Activated CD8-positive, alpha-beta T cell treated with anti-CD3 and anti-CD28 coated beads for 36 hours (primary cell): ENCODE measurements at regions of chr5 and their contacts with region 1.

Region 1: DNA sequence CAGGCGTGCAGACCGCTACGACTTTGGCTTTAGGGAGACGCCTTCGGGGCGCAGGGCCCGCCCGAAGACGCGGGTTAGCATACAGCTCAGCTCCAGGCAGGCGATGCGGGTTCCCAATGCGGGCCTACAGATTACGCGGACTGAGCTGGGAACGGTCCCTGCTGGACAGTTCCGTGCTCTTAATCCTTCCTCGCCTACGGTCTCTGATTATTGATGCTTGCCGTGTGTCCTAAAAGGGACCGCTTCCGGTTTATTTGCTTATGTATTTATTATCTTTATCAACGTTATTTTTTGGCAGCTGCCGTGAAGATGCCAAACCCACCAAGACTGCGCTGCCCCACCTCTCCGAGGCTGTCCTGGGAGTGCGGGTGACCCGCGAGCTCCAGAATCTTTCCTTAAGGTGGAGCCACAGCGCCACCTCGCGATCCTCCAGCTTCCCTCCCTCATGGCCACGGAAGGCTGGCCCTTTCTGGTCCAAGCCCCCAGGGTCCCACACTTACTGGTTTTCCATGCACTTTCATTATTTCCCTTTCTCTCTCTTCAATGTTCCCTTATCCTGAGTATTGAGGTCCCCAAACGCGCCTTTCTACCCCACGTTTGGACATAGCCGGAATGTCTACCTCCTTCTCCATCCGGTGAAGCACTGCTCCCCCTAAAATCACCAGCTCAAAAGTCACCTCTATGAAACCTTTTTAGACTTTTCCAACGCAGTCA is 7.0 kb upstream of the EBF1 start:
- DNase-seq: peak; percentile 82
- ATAC-seq: peak; percentile 83
- H3K4me3 Mint-ChIP-seq: peak overlapping the region; percentile 56
- H3K27ac Mint-ChIP-seq: no peak overlapping the region
- H3K4me1 Mint-ChIP-seq: peaks cover 15% of the 10 kb centered on the region
- H3K27me3 Mint-ChIP-seq: peaks cover 45% of the 10 kb centered on the region
- CTCF ChIP-seq: peak; percentile 94

Region 2: GRCh38 chr5:158170060-158170459 is 936.7 kb before region 1 on chr5:
- CTCF ChIA-PET with region 1: interaction called, 46 read pairs
- POLR2A ChIA-PET with region 1: interaction called, 3 read pairs
- intact Hi-C with region 1: no loop called
- DNase-seq: no peak
- ATAC-seq: no peak
- H3K4me3 Mint-ChIP-seq: no peak overlapping the region
- H3K27ac Mint-ChIP-seq: no peak overlapping the region
- H3K4me1 Mint-ChIP-seq: no peaks in the 10 kb centered on the region
- H3K27me3 Mint-ChIP-seq: peaks cover 7% of the 10 kb centered on the region
- CTCF ChIP-seq: no peak

Region 3: GRCh38 chr5:158884827-158885518 is 221.8 kb before region 1 on chr5:
- CTCF ChIA-PET with region 1: interaction called, 3 read pairs
- POLR2A ChIA-PET with region 1: no interaction called
- intact Hi-C with region 1: loop called (anchors 5 kb)
- DNase-seq: no peak
- ATAC-seq: no peak
- H3K4me3 Mint-ChIP-seq: no peak overlapping the region
- H3K27ac Mint-ChIP-seq: no peak overlapping the region
- H3K4me1 Mint-ChIP-seq: peaks cover 9% of the 10 kb centered on the region
- H3K27me3 Mint-ChIP-seq: peaks cover 3% of the 10 kb centered on the region
- CTCF ChIP-seq: no peak

Region 4: GRCh38 chr5:159094745-159095144 is 12.0 kb before region 1 on chr5:
- CTCF ChIA-PET with region 1: interaction called, 39 read pairs
- POLR2A ChIA-PET with region 1: no interaction called
- intact Hi-C with region 1: no loop called
- DNase-seq: peak; percentile 85
- ATAC-seq: no peak
- H3K4me3 Mint-ChIP-seq: no peak overlapping the region
- H3K27ac Mint-ChIP-seq: no peak overlapping the region
- H3K4me1 Mint-ChIP-seq: peaks cover 29% of the 10 kb centered on the region
- H3K27me3 Mint-ChIP-seq: peaks cover 36% of the 10 kb centered on the region
- CTCF ChIP-seq: no peak

Region 5: DNA sequence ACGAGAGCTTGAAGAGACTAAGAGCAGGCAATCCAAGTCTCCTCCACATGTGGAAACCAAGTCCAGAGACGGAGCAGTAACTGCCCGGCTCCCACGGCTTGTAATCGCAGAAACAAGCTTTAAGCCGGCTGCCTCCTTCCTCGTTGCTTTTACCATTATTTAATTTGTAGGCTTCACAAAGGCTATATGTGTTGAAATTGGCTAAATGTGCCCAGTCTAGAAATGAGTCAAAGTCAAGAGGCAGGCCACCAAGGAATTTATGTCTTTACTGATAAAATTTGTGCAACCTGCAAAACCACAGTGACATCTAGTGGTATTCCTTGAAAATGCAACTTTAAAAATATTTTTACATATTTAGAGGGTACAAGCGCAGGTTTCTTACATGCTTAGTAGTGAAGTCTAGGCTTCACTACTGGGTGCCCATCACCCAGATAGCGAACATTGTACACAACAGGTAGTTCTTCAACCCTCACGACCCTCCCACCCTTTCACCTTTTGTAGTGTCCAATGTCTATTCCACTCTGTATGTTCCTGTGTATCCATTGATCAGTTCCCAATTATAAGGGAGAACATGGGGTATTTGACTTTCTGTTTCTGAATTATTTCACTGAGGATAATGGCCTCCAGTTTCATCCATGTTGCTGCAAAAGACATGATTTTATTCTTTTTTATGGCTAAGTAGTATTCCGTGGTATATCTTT is 26.5 kb after region 1 on chr5:
- CTCF ChIA-PET with region 1: interaction called, 28 read pairs
- POLR2A ChIA-PET with region 1: no interaction called
- intact Hi-C with region 1: no loop called
- DNase-seq: no peak
- ATAC-seq: peak; percentile 60
- H3K4me3 Mint-ChIP-seq: no peak overlapping the region
- H3K27ac Mint-ChIP-seq: no peak overlapping the region
- H3K4me1 Mint-ChIP-seq: no peaks in the 10 kb centered on the region
- H3K27me3 Mint-ChIP-seq: peaks cover 1% of the 10 kb centered on the region
- CTCF ChIP-seq: peak; percentile 82

Region 6: DNA sequence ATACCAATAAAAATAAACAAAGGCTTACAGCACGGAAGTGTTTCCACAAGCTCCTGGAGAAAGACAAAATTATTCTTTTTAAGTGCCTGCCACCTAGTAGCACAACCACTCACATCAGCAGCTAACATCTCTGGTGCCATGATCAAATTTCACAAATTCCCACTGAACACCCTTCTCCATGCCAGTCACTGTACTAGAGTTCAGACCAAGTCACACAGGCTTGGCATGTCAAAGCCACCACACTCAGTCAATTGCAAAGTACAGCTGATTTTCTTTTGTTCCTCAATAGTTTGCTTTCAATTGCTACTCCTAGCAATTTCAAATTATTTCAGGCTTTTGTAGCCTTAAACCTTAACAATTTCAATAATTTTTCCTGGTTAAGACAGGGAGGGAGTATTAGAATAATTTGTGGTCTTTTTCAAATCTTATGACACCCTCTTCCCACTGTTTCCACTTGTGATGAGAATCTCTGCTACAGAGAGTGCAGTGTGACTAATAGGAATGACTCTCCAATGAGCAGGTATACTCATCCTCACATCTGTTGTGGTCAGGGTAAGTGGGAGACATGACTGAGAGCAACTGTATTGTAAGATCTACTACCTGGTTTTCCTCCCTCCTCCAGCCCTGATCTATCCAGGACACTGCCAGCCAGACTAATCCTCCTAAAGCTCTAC is 56.4 kb after region 1 on chr5:
- CTCF ChIA-PET with region 1: no interaction called
- POLR2A ChIA-PET with region 1: no interaction called
- intact Hi-C with region 1: no loop called
- DNase-seq: peak; percentile 25
- ATAC-seq: peak; percentile 93
- H3K4me3 Mint-ChIP-seq: no peak overlapping the region
- H3K27ac Mint-ChIP-seq: peak overlapping the region; percentile 80
- H3K4me1 Mint-ChIP-seq: peaks cover 44% of the 10 kb centered on the region
- H3K27me3 Mint-ChIP-seq: no peaks in the 10 kb centered on the region
- CTCF ChIP-seq: no peak